ENCODE measurements at regions of chr17 and their contacts with region 1.

Region 1: GRCh38 chr17:48047741-48048383 is at the start of gene NFE2L1:
- DNase-seq: peak; percentile 95
- ATAC-seq: peak; percentile 97
- H3K4me3 Mint-ChIP-seq: peak within 1 kb of the TSS; percentile 99
- H3K27ac Mint-ChIP-seq: peak within 1 kb of the TSS; percentile 98
- H3K4me1 Mint-ChIP-seq: peaks cover 56% of the 10 kb centered on the region
- H3K27me3 Mint-ChIP-seq: no peaks in the 10 kb centered on the region
- total RNA-seq, gene NFE2L1: 62.2 to 63.1 TPM

Region 2: DNA sequence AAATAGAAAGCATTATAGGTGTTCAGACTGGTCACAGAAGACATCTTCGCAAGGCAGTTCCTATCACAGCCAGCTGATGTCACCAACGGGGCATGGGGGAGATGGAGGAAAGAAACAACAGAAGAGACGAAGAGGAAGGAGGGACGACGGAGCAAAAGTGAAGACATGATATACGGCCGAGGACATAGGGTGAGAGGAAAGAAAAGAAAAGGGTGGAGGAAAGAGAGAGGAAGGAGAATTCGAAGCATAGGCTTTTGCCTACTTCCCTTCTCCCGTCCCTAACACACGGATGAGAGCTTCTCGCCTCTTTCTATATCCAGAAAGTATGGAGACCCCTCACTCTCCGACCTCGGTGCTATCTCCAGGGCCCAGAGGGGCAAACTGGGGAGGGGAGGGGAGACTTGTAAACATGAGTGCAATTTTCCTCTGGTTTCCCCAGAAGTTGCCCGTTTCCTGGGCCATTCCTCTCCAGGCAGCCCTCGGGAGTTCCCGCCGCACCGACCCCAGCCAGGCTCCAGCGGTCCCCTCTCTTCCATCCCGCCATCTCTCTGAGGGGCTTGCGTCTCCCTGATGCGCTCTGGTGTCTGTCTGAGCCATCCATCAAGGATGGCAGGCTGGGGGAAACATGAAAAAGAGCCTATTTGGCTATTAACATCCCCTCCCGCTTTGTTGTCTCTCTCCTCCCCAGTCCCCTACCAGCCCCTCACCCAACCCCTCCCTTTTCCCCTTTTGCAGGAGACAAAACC is 36.3 kb before region 1 on chr17:
- POLR2A ChIA-PET with region 1: no interaction called
- DNase-seq: peak; percentile 52
- ATAC-seq: peak; percentile 80
- H3K4me3 Mint-ChIP-seq: peak overlapping the region; percentile 89
- H3K27ac Mint-ChIP-seq: peak overlapping the region; percentile 75
- H3K4me1 Mint-ChIP-seq: peaks cover 20% of the 10 kb centered on the region
- H3K27me3 Mint-ChIP-seq: peaks cover 31% of the 10 kb centered on the region

Region 3: DNA sequence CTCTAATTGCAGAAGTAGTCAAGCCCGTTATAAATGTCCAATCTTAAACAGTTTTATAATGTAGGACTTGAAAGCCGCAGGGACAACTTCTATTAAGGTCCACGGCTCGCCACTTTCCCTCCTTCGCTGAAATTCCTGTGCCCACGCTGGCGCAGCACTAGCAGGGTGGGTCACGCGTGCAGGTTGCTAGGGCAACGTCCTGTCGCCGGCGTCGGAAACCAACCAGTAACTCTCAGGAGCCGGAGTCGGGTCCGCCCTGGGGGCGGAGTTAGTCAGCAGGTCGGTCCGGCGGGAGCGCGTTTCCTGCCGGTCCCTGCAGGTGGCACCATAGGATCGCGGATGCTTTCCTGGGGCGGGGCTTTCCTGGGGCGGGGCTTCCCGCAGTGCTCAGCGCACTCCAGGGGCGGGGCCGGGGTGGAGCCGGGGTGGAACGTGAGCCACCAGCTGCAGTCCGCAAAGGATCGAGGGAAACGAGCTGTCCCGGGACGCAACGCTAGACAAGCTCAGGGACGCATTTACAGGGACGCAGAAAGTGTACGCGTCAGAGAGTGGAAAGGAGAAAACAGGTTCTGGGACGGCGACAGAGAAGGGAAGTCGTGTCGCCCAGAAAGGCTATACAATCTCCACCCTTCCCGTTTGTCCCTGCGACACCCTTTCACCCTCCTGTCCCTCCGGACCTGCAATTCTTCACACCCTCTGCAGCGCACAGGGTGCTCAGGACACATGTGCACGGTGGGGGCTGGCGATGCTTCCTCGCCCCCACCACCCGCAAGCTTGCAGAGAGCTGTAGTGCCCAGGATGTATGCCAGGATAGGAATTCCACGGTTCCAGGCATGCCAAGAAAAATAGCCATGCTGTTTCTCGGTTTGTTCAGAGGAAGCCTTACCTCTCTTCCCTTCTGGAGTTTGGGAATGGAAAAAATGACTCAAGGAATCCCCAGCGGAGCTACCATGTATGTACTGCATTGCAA is 22.6 kb before region 1 on chr17:
- POLR2A ChIA-PET with region 1: interaction called, 15 read pairs
- DNase-seq: peak; percentile 96
- ATAC-seq: peak; percentile 88
- H3K4me3 Mint-ChIP-seq: peak overlapping the region; percentile 85
- H3K27ac Mint-ChIP-seq: peak overlapping the region; percentile 69
- H3K4me1 Mint-ChIP-seq: peaks cover 24% of the 10 kb centered on the region
- H3K27me3 Mint-ChIP-seq: peaks cover 24% of the 10 kb centered on the region

Region 4: DNA sequence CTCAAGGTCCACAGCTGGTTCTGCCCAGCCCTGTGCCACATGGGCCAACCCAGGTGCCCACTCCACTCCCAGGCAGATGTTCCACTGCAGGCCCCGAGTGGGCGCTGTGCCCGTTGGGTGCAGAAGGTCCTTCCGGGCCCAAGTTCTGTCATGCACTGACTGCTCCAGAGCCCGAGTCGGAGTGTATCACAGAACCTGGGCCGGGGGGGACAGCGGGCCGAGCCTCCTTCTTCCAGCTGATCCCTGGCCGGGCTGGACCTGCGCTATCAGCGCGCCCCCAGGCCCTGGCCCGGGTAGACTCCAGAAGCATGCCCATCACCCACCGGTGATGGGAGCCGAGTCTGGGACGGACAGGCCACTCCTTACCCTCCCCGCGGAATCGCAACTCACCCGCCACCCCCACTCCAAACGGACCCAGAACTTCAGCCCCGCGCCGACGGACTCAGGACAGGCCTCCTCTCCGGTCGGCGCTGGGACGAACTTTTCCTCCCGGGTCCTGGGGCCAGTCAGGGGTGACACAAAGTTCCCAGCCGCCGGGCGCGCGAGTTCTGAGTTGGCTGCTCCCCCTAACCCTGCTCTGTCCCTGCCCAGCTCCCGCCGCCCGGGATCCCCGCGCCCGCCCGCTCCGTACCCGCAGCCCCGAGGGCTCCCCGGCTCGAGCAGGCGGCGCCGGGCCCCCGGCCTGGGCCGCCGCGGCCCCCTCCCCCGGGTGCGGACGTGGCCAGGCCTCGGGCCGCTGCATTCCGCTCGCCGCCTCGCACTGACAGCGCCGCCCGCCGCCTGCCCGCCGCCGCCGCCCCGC is 10.6 kb before region 1 on chr17 and contains the start of gene COPZ2:
- POLR2A ChIA-PET with region 1: interaction called, 20 read pairs
- DNase-seq: peak; percentile 72
- ATAC-seq: peak; percentile 91
- H3K4me3 Mint-ChIP-seq: peak within 1 kb of the TSS; percentile 94
- H3K27ac Mint-ChIP-seq: peak within 1 kb of the TSS; percentile 80
- H3K4me1 Mint-ChIP-seq: peaks cover 13% of the 10 kb centered on the region
- H3K27me3 Mint-ChIP-seq: peaks cover 29% of the 10 kb centered on the region
- total RNA-seq, gene COPZ2: 6.1 to 8.8 TPM

Region 5: DNA sequence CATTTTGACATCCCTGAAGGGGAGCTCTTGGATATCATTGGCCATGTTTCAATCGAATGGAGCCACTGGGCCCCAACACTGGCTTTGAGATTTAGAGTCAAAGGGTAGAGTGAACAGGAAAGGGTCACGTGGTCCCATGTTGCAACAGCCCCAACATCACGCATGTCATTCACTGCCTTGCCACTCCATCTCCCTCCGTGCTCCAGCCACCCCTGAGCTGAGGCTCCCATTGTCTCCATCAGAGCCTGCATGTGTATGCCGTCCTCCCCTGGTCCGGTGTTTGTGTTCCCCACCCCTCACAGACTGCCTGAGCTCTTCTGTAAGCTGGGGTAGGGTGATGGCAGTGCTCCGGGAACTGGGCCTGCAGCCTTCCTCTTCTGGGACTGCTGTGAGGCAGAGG is 12.4 kb after region 1 on chr17:
- POLR2A ChIA-PET with region 1: interaction called, 17 read pairs
- DNase-seq: no peak
- ATAC-seq: no peak
- H3K4me3 Mint-ChIP-seq: no peak overlapping the region
- H3K27ac Mint-ChIP-seq: no peak overlapping the region
- H3K4me1 Mint-ChIP-seq: peaks cover 14% of the 10 kb centered on the region
- H3K27me3 Mint-ChIP-seq: no peaks in the 10 kb centered on the region

Region 6: DNA sequence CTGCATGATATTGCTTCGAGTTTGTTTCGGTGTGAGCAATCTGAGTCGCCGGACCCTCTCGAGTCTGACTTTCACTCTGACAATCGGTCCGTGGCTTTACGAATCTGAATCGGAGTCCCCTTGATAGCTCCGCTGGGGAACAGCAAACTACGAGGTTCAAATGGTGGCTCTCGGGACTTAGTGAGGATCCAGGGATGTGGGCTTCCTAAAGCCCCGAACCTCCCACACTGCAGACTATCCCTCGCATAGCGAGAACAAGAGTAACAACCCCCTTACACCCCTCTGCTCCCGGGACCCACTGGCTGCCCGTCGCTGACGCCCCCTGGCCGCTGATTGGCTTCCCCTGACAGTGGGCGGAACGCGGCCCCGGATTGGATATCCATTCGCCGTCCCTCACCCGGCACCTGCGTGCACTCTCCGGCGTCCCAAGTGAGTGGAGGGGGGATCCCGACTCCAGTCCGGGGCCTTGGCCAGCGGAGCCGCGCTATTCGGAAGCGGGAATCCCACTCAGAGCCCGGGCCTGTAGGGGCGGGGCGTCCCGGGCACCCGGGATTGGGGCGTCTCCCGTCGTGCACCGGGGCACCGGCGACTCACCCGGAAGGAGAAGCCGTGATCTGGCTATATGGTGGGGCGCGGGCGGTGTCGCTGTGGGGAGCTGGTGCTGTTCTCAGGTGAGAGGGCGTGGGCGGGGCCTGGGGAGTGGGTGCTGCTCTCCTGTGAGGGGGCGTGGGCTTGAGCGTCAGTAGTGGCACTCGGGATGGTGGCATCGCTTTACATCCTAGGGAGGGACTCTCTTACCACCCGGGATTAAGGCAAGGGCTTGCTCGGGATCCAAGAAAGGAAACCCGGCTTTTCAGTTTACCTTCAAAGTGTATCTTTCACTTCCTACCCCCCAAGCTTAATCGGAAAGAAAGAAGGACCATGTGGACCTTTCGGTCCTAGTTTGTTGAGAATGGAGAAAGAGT is 59.6 kb after region 1 on chr17 and contains the start of gene SNX11:
- POLR2A ChIA-PET with region 1: interaction called, 12 read pairs
- DNase-seq: peak; percentile 94
- ATAC-seq: peak; percentile 91
- H3K4me3 Mint-ChIP-seq: peak within 1 kb of the TSS; percentile 100
- H3K27ac Mint-ChIP-seq: peak within 1 kb of the TSS; percentile 99
- H3K4me1 Mint-ChIP-seq: peaks cover 55% of the 10 kb centered on the region
- H3K27me3 Mint-ChIP-seq: no peaks in the 10 kb centered on the region
- total RNA-seq, gene SNX11: 31.3 to 36.8 TPM